ENCODE measurements at regions of chr2 and their contacts with region 1.

Region 1: GRCh38 chr2:42828487-42829425 is 36.4 kb upstream of the HAAO start:
- DNase-seq: peak; percentile 34 to 84 (median 70)
- ATAC-seq: peak; percentile 97
- H3K4me3 ChIP-seq: no peak overlapping the region
- H3K4me3 Mint-ChIP-seq: no peak overlapping the region
- H3K27ac ChIP-seq: no peak overlapping the region
- H3K27ac Mint-ChIP-seq: no peak overlapping the region
- H3K4me1 ChIP-seq: peaks cover 9% of the 10 kb centered on the region
- H3K4me1 Mint-ChIP-seq: peaks cover 17% of the 10 kb centered on the region
- H3K27me3 ChIP-seq: peaks cover 0 to 2% of the 10 kb centered on the region in 2 experiments
- H3K27me3 Mint-ChIP-seq: peaks cover 1% of the 10 kb centered on the region
- CTCF ChIP-seq: peak; percentile 88

Region 2: GRCh38 chr2:41994207-41994606 is 834.5 kb before region 1 on chr2:
- CTCF ChIA-PET with region 1: no interaction called
- POLR2A ChIA-PET with region 1: no interaction called
- intact Hi-C with region 1: loop called in 1 of 2 experiments (anchors 5 kb)
- DNase-seq: no peak
- ATAC-seq: no peak
- H3K4me3 ChIP-seq: no peak overlapping the region
- H3K4me3 Mint-ChIP-seq: no peak overlapping the region
- H3K27ac ChIP-seq: no peak overlapping the region
- H3K27ac Mint-ChIP-seq: no peak overlapping the region
- H3K4me1 ChIP-seq: no peaks in the 10 kb centered on the region
- H3K4me1 Mint-ChIP-seq: no peaks in the 10 kb centered on the region
- H3K27me3 ChIP-seq: no peaks in the 10 kb centered on the region
- H3K27me3 Mint-ChIP-seq: peaks cover 24% of the 10 kb centered on the region
- CTCF ChIP-seq: no peak

Region 3: DNA sequence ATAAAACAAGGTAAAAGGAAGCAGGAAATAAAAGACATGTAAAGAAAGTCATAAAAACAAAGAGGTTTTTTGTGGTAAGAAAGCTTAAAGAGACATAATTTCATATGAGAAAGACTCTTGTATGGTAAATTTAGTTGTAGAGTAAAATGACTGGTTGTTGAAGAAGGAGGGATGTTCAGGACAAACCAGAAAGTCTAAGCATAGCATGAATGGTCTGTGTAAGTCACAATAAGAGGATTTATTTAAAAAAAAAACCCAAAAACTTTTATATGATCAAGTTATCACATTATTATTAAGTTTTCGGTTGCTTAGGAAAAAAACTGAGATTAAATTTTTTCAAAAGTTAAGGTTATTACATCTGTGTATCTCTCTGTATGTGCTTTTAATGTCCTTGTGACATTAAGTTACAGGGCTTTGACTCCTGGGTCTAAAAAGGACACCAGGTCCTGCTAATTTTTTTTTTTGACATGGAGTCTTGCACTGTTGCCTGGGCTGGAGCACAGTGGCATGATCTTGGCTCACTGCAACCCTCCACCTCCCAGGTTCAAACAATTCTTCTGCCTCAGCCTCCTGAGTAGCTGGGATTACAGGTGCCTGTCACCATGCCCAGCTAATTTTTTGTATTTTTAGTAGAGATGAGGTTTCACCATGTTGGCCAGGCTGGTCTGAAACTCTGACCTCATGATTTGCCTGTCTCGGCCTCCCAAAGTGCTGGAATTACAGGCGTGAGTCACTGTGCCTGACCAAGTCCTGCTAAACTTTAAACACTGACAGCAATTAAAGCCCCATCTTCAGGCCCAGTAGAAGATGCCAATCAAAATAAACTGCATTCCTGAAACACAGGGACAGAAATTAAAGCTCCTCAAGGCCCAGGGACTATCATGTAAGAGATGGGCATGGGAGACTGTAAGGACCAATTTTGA is 50.6 kb before region 1 on chr2:
- CTCF ChIA-PET with region 1: no interaction called
- POLR2A ChIA-PET with region 1: no interaction called
- intact Hi-C with region 1: no loop called
- DNase-seq: peak in 1 of 9 experiments; percentile 9
- ATAC-seq: no peak
- H3K4me3 ChIP-seq: no peak overlapping the region
- H3K4me3 Mint-ChIP-seq: peak overlapping the region; percentile 9
- H3K27ac ChIP-seq: no peak overlapping the region
- H3K27ac Mint-ChIP-seq: peak overlapping the region; percentile 61
- H3K4me1 ChIP-seq: peaks cover 25% of the 10 kb centered on the region
- H3K4me1 Mint-ChIP-seq: peaks cover 23% of the 10 kb centered on the region
- H3K27me3 ChIP-seq: no peaks in the 10 kb centered on the region
- H3K27me3 Mint-ChIP-seq: no peaks in the 10 kb centered on the region
- CTCF ChIP-seq: no peak

Region 4: DNA sequence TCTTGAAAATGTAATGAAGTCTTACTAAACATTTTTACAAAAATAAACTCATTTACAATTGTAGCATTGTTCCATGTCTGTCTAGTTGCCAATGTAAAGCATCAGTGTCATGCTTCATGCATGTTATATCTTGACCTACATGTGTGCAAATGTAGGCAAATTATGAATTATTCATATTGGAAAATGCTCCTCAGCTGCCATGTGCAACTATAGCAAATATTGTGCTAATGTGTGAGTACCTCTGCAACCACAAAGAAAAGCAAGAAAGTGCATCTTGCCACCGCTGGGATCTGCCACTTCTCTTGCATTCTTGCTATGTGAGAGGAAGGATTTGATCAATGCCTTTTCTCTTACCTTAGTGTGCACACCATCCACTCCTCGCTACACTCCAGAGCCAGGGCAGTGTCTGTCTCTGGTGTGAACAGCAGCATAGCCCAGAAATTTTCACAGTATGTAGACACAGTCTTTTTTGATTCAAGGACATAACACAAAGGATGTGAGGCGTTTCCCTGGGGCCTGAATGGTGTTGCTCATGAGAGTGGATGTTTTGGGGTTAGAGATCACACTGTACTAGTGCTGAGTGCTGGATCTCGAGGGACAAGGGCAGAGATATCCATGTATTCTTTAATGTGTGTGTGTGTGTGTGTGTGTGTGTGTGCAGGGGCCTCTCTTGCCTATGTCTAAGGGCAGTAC is 11.2 kb after region 1 on chr2:
- CTCF ChIA-PET with region 1: interaction called, 12 read pairs
- POLR2A ChIA-PET with region 1: no interaction called
- intact Hi-C with region 1: no loop called
- DNase-seq: peak in 1 of 9 experiments; percentile 9
- ATAC-seq: no peak
- H3K4me3 ChIP-seq: no peak overlapping the region
- H3K4me3 Mint-ChIP-seq: no peak overlapping the region
- H3K27ac ChIP-seq: no peak overlapping the region
- H3K27ac Mint-ChIP-seq: no peak overlapping the region
- H3K4me1 ChIP-seq: no peaks in the 10 kb centered on the region
- H3K4me1 Mint-ChIP-seq: no peaks in the 10 kb centered on the region
- H3K27me3 ChIP-seq: no peaks in the 10 kb centered on the region
- H3K27me3 Mint-ChIP-seq: no peaks in the 10 kb centered on the region
- CTCF ChIP-seq: no peak

Region 5: DNA sequence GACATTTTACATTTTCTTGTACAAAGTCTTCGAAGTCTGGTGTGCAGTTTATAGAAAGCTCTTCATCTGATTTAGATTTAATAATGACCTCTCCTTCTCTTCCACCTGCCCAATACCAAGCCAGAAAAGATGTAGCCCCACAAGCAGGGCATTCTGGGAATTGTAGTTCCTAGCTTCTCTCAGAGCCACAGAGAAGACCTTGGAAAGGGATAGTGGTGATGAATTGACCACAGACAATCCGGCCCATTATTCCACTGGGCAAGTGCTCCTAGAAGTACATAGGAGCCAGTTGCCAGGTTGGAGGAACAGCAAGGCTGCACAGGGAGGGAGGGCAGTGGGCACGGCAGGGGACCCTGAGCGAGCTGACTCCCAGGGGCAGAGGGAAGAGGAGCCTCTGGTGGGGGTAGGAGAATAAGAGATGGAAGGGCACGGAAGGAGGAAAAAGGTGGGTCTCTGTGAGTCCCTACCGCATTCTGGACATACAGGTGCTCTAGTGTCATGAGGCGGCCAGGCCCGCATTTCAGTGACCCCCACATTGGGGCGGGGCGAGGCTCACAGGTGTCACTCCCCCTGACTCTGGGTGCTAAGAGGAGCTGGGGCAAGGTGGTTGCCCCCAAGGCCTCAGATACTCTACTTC is 116.1 kb after region 1 on chr2:
- CTCF ChIA-PET with region 1: interaction called, 3 read pairs
- POLR2A ChIA-PET with region 1: no interaction called
- intact Hi-C with region 1: loop called (anchors 1 to 5 kb)
- DNase-seq: no peak
- ATAC-seq: no peak
- H3K4me3 ChIP-seq: no peak overlapping the region
- H3K4me3 Mint-ChIP-seq: no peak overlapping the region
- H3K27ac ChIP-seq: no peak overlapping the region
- H3K27ac Mint-ChIP-seq: no peak overlapping the region
- H3K4me1 ChIP-seq: no peaks in the 10 kb centered on the region
- H3K4me1 Mint-ChIP-seq: peaks cover 3% of the 10 kb centered on the region
- H3K27me3 ChIP-seq: no peaks in the 10 kb centered on the region
- H3K27me3 Mint-ChIP-seq: no peaks in the 10 kb centered on the region
- CTCF ChIP-seq: no peak

Region 6: DNA sequence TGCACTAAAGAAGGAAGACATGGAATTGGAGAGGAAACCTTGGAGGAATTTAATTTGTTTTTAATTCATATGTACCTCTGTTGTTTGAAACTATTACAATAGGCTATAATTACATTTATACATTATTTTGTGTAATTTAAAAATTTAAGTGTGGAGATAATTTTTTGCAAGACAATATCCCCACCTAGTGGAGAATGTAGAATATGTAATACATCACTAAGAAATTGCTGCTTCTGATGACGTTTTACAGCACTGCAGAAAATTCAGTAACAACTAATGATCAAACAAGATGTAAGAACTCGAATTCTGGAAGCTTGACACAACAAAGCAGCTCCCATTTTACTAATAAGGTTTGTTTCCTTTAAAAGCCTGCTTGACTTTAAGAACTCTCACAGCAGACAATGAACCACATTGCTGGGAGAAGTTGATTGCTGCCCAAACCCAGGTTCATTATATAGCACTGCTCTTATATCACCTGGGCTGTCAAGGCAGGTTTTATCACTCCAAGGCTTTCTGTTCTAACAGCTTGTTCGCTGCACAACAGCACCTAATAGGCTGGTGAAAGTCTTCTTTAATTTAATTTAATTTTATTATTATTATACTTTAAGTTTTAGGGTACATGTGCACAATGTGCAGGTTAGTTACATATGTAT is 713.7 kb after region 1 on chr2:
- CTCF ChIA-PET with region 1: interaction called, 3 read pairs
- POLR2A ChIA-PET with region 1: interaction called, 3 read pairs
- intact Hi-C with region 1: loop called (anchors 1 kb)
- DNase-seq: peak in 2 of 9 experiments; percentile 48 to 66
- ATAC-seq: peak; percentile 88
- H3K4me3 ChIP-seq: no peak overlapping the region
- H3K4me3 Mint-ChIP-seq: no peak overlapping the region
- H3K27ac ChIP-seq: no peak overlapping the region
- H3K27ac Mint-ChIP-seq: no peak overlapping the region
- H3K4me1 ChIP-seq: no peaks in the 10 kb centered on the region
- H3K4me1 Mint-ChIP-seq: peaks cover 16% of the 10 kb centered on the region
- H3K27me3 ChIP-seq: no peaks in the 10 kb centered on the region
- H3K27me3 Mint-ChIP-seq: no peaks in the 10 kb centered on the region
- CTCF ChIP-seq: peak; percentile 87

Region 7: GRCh38 chr2:43576981-43577892 is 748.5 kb after region 1 on chr2:
- CTCF ChIA-PET with region 1: interaction called, 7 read pairs
- POLR2A ChIA-PET with region 1: no interaction called
- intact Hi-C with region 1: loop called (anchors 1 kb)
- DNase-seq: peak in 4 of 9 experiments; percentile 20 to 74 (median 50)
- ATAC-seq: peak; percentile 63
- H3K4me3 ChIP-seq: no peak overlapping the region
- H3K4me3 Mint-ChIP-seq: no peak overlapping the region
- H3K27ac ChIP-seq: no peak overlapping the region
- H3K27ac Mint-ChIP-seq: no peak overlapping the region
- H3K4me1 ChIP-seq: no peaks in the 10 kb centered on the region
- H3K4me1 Mint-ChIP-seq: peaks cover 3% of the 10 kb centered on the region
- H3K27me3 ChIP-seq: no peaks in the 10 kb centered on the region
- H3K27me3 Mint-ChIP-seq: no peaks in the 10 kb centered on the region
- CTCF ChIP-seq: peak; percentile 86

Region 8: DNA sequence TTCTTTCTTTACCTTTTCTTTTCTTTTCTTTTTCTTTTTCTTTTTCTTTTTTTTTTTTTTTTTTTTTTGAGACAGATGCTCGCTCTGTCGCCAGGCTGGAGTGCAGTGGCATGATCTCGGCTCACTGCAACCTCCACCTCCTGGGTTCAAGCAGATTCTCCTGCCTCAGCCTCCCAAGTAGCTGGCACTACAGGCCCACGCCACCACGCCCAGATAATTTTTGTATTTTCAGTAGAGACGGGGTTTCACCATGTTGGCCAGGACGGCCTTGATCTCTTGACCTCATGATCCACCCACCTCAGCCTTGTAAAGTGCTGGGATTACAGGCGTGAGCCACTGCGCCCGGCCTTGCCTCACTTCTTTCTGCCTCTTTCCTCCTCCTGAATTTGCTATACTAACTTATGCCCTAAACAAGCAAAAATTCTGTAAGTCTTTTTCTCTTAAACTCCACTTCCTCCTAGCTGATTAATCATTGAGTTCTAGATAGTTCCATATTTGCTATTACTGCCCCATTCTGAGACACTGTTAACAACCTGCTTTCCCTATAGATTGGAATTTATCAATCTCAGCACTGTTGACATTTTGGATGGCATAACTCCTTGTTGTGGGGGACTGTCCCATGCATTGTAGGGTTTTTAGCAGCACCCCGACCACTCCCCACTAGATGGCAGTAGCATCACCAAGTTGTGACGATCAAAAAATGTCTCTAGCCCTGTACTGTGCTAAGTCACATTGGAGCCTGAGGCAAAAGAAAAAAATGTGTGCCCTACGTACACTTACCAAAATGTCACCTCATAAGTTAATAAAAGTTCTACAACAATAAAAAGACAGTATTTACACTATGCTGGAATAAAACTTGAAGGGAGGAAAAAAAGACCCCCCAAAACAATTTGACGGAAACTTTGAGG is 783.5 kb after region 1 on chr2:
- CTCF ChIA-PET with region 1: interaction called, 14 read pairs
- POLR2A ChIA-PET with region 1: no interaction called
- intact Hi-C with region 1: loop called (anchors 1 to 2 kb)
- DNase-seq: peak; percentile 52 to 81 (median 72)
- ATAC-seq: peak; percentile 99
- H3K4me3 ChIP-seq: no peak overlapping the region
- H3K4me3 Mint-ChIP-seq: no peak overlapping the region
- H3K27ac ChIP-seq: no peak overlapping the region
- H3K27ac Mint-ChIP-seq: no peak overlapping the region
- H3K4me1 ChIP-seq: no peaks in the 10 kb centered on the region
- H3K4me1 Mint-ChIP-seq: no peaks in the 10 kb centered on the region
- H3K27me3 ChIP-seq: no peaks in the 10 kb centered on the region
- H3K27me3 Mint-ChIP-seq: peaks cover 7% of the 10 kb centered on the region
- CTCF ChIP-seq: peak; percentile 74